ENCODE measurements at regions of chr1 and their contacts with region 1.

Region 1: GRCh38 chr1:211613093-211613947 is 34.4 kb upstream of the SLC30A1 start:
- DNase-seq: peak; percentile 83 to 86
- ATAC-seq: peak; percentile 89 to 95 (median 91)
- H3K4me3 ChIP-seq: no peak overlapping the region
- H3K27ac ChIP-seq: peak overlapping the region; percentile 50
- H3K4me1 ChIP-seq: peaks cover 12% of the 10 kb centered on the region
- H3K27me3 ChIP-seq: no peaks in the 10 kb centered on the region
- CTCF ChIP-seq: no peak

Region 2: GRCh38 chr1:211578640-211579433 is 34.5 kb before region 1 on chr1 and contains the start of gene SLC30A1:
- intact Hi-C with region 1: loop called in 1 of 2 experiments (anchors 5 kb)
- DNase-seq: peak; percentile 99 to 100
- ATAC-seq: peak; percentile 97 to 99 (median 98)
- H3K4me3 ChIP-seq: peak within 1 kb of the TSS; percentile 97
- H3K27ac ChIP-seq: peak within 1 kb of the TSS; percentile 83
- H3K4me1 ChIP-seq: peaks cover 19% of the 10 kb centered on the region
- H3K27me3 ChIP-seq: no peaks in the 10 kb centered on the region
- CTCF ChIP-seq: no peak
- total RNA-seq, gene SLC30A1: 1.5 to 5.2 (median 3.0) TPM